Posterior vena cava (tissue), 2 donors: ENCODE measurements at regions of chr3 and their contacts with region 1.

Region 1: GRCh38 chr3:194930377-194931204 is 244.9 kb downstream of the FAM43A start:
- DNase-seq: no peak

Region 2: GRCh38 chr3:194486540-194487288 is 443.9 kb before region 1 on chr3 and contains the start of gene ATP13A3:
- intact Hi-C with region 1: loop called in 1 of 2 experiments (anchors 5 kb)
- DNase-seq: peak; percentile 97
- total RNA-seq, gene ATP13A3: 86.3 to 152 TPM

Region 3: DNA sequence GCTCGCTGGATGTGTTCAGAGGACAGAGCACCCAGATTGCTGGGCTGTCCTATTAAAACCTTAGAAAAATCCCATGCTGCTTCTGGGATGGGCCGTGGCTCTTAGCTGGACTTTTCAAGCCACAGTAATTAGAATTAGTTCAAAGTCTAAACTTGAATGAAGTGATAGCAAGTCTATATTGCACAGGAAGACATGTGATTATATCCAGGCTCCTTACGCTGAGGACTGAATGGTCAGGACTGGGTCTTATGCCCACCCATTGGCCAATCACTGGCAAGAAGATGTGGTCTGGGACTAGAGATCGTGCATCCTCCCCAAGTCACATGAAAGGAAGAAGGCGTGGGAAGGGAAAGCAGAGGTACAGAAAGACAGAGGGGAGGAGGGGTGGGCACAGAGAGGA is 17.3 kb before region 1 on chr3:
- intact Hi-C with region 1: loop called in 1 of 2 experiments (anchors 1 kb)
- DNase-seq: no peak